ENCODE measurements at regions of chrX and their contacts with region 1.

Region 1: DNA sequence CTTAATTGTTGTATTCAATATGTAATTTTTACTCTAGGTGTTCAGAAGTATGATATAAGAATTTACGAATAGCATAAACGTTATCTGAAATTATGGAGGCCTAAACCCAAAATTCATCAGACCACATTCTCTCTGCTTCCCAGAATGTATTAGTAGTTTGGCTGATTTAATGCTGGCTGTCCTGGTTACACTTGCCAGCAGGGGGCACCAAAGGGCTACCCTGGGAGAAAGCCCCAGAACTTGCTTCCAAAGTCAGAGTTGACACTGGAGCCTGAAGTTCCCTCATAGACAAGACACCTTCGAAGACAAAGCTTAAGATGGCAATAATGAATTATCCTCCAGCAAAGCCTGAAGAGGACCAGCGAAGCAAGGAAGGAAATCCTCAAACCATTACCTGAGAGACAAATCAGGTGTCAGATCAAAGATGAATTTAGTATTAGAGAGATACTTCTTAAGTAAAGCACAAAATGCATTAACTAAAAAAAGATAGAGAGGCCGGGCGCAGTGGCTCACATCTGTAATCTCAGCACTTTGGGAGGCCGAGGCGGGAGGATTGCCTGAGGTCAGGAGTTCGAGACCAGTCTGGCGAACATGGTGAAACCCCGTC is 11.3 kb upstream of the ANOS1 start:
- DNase-seq: peak in 4 of 5 donors; percentile 25 to 62 (median 47)
- ATAC-seq: no peak
- H3K4me3 ChIP-seq: no peak overlapping the region
- H3K27ac ChIP-seq: no peak overlapping the region
- H3K4me1 ChIP-seq: no peaks in the 10 kb centered on the region
- H3K27me3 ChIP-seq: no peaks in the 10 kb centered on the region
- CTCF ChIP-seq: peak; percentile 45 to 76 (median 52)
- POLR2A ChIP-seq: no peak

Region 2: GRCh38 chrX:8179656-8180055 is 563.6 kb before region 1 on chrX:
- intact Hi-C with region 1: loop called in 3 of 10 experiments (anchors 10 kb)
- DNase-seq: no peak
- ATAC-seq: no peak
- H3K4me3 ChIP-seq: no peak overlapping the region
- H3K27ac ChIP-seq: no peak overlapping the region
- H3K4me1 ChIP-seq: no peaks in the 10 kb centered on the region
- H3K27me3 ChIP-seq: no peaks in the 10 kb centered on the region
- CTCF ChIP-seq: peak in 7 of 12 donors; percentile 12 to 40 (median 34)
- POLR2A ChIP-seq: no peak

Region 3: GRCh38 chrX:8364369-8365141 is 378.7 kb before region 1 on chrX:
- intact Hi-C with region 1: loop called in 8 of 10 experiments (anchors 5 to 10 kb)
- DNase-seq: peak in 3 of 5 donors; percentile 5 to 36 (median 19)
- ATAC-seq: peak in 2 of 4 donors; percentile 24 to 51
- H3K4me3 ChIP-seq: no peak overlapping the region
- H3K27ac ChIP-seq: no peak overlapping the region
- H3K4me1 ChIP-seq: peaks cover 0 to 12% (median 0%) of the 10 kb centered on the region in 12 donors
- H3K27me3 ChIP-seq: no peaks in the 10 kb centered on the region
- CTCF ChIP-seq: peak; percentile 21 to 56 (median 40)
- POLR2A ChIP-seq: no peak

Measured in heart left ventricle (tissue), 16 donors.